Activated CD4-positive, alpha-beta memory T cell treated with anti-CD3 and anti-CD28 coated beads, Interleukin-2, amount 10 ng/mL, durations not matched to agents 7 days and 5 days (primary cell): ENCODE measurements at regions of chr14 and their contacts with region 1.

Region 1: GRCh38 chr14:50321009-50321660 is 9.0 kb downstream of the DMAC2L start:
- DNase-seq: peak; percentile 74
- H3K4me3 Mint-ChIP-seq: no peak overlapping the region
- H3K27ac Mint-ChIP-seq: no peak overlapping the region
- H3K4me1 Mint-ChIP-seq: peaks cover 20% of the 10 kb centered on the region
- H3K27me3 Mint-ChIP-seq: no peaks in the 10 kb centered on the region

Region 2: DNA sequence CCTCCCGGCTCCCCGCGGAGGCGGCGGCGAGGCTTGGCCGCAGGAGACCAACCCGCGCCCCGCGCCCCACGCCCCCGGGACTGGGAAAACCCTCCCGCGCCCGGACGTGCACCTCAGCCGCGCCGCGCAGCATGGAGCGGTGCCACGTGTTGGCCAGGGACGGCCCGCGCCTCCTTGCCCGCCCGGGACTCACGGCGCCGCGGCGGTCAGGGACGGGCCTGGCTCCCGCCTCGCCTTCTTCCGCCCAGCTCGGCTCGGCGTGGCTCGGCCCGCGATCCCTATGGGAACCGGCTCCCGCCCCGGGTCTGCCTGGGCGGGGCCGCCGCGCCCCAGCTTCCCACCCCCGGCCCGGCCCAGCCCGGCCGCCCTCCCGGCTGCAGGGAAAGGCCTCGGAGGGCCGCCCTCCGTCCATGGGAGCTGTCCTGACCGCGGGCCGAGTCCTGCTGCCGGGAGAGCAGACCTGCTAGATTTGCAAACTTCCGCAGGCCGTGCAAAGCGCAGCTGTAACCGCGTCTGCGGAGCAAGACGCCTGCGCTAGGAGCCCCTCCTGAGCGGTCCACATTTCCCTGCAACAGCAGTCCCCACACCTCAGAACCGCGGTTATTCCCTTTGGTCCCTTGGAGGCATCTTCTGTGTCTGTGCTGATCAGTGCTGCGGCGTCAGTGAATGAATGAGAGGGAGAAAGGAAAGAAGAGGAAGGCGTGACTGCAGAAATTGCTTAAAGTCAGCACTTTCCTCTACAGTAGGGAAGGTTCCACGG is 75.7 kb after region 1 on chr14 and contains the start of gene CDKL1:
- CTCF ChIA-PET with region 1: interaction called, 10 read pairs
- POLR2A ChIA-PET with region 1: interaction called, 8 read pairs
- DNase-seq: peak; percentile 39
- H3K4me3 Mint-ChIP-seq: peak within 1 kb of the TSS; percentile 78
- H3K27ac Mint-ChIP-seq: no peak within 1 kb of the TSS
- H3K4me1 Mint-ChIP-seq: peaks cover 15% of the 10 kb centered on the region
- H3K27me3 Mint-ChIP-seq: peaks cover 6% of the 10 kb centered on the region
- total RNA-seq, gene CDKL1: 5.3 to 8.8 TPM

Region 3: GRCh38 chr14:50520947-50521815 is 200.0 kb after region 1 on chr14:
- CTCF ChIA-PET with region 1: interaction called, 13 read pairs
- POLR2A ChIA-PET with region 1: interaction called, 5 read pairs
- DNase-seq: peak; percentile 52
- H3K4me3 Mint-ChIP-seq: peak overlapping the region; percentile 60
- H3K27ac Mint-ChIP-seq: peak overlapping the region; percentile 71
- H3K4me1 Mint-ChIP-seq: peaks cover 44% of the 10 kb centered on the region
- H3K27me3 Mint-ChIP-seq: no peaks in the 10 kb centered on the region

Region 4: GRCh38 chr14:50532502-50533240 is 211.5 kb after region 1 on chr14 and contains the start of gene MAP4K5:
- CTCF ChIA-PET with region 1: interaction called, 30 read pairs
- POLR2A ChIA-PET with region 1: interaction called, 12 read pairs
- DNase-seq: peak; percentile 90
- H3K4me3 Mint-ChIP-seq: peak within 1 kb of the TSS; percentile 85
- H3K27ac Mint-ChIP-seq: peak within 1 kb of the TSS; percentile 55
- H3K4me1 Mint-ChIP-seq: peaks cover 37% of the 10 kb centered on the region
- H3K27me3 Mint-ChIP-seq: peaks cover 11% of the 10 kb centered on the region
- total RNA-seq, gene MAP4K5: 22.0 TPM